ENCODE measurements at regions of chr9 and their contacts with region 1.

Region 1: DNA sequence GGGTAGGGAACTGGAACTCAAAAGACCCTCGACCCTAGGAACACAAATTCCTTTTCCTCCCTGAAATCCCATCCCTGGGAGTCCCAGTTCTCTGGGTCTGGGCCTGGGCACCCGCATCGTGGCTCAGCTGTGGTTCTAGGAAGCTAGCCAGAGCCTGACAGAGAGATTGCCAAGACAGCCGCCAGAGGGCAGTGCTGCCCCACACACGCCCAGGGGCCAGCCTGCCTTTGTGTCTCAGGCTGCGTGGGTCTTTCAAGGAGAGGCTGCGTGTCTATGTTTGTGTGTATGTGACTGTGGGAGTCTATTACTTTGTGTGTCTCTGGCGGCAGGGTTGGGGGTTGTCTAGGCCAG is 32.0 kb upstream of the TTLL11 start:
- DNase-seq: no peak
- H3K4me3 ChIP-seq: no peak overlapping the region
- H3K27me3 ChIP-seq: no peaks in the 10 kb centered on the region
- CTCF ChIP-seq: peak; percentile 97

Region 2: DNA sequence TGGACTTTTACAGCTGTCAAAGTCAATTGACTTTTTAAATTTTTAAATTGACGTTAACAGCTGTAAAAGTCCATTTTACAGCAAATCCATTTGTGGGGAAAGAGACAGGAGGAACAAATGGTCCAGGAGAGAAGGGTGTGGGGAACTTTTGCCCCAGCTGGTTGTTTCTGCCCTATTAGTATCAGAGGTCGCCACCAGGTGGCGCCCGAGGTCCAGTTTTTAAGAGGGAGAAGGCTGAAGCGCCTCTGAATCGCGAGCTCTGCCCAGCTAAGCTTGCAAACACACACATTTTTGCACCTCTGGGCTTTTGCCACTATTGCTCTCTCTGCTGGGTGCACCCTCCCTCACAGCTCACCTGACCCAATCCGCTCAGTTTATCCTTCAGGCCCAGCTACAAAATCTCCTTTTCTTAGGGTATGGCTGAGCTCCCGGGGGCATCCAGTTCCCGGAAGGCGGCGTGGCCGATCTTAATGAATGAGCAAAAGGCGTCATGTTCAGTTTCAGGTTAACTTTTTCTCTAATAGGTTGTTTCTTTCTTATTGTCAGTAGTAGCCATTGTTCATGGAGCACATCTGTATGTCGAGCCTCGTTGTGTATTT is 25.8 kb before region 1 on chr9:
- CTCF ChIA-PET with region 1: interaction called, 212 read pairs
- POLR2A ChIA-PET with region 1: no interaction called
- DNase-seq: no peak
- H3K4me3 ChIP-seq: no peak overlapping the region
- H3K27me3 ChIP-seq: no peaks in the 10 kb centered on the region; the same call in 1 of the 2 replicates
- CTCF ChIP-seq: peak; percentile 83

Region 3: GRCh38 chr9:122144836-122145591 is 19.9 kb after region 1 on chr9:
- CTCF ChIA-PET with region 1: interaction called, 28 read pairs
- POLR2A ChIA-PET with region 1: no interaction called
- DNase-seq: no peak
- H3K4me3 ChIP-seq: no peak overlapping the region
- H3K27me3 ChIP-seq: no peaks in the 10 kb centered on the region
- CTCF ChIP-seq: peak; percentile 49

Region 4: GRCh38 chr9:122350638-122351355 is 225.7 kb after region 1 on chr9:
- CTCF ChIA-PET with region 1: interaction called, 422 read pairs
- POLR2A ChIA-PET with region 1: no interaction called
- DNase-seq: no peak
- H3K4me3 ChIP-seq: no peak overlapping the region
- H3K27me3 ChIP-seq: no peaks in the 10 kb centered on the region
- CTCF ChIP-seq: peak; percentile 94

Region 5: GRCh38 chr9:122445155-122445749 is 320.1 kb after region 1 on chr9:
- CTCF ChIA-PET with region 1: interaction called, 10 read pairs
- POLR2A ChIA-PET with region 1: no interaction called
- DNase-seq: peak; percentile 90
- H3K4me3 ChIP-seq: no peak overlapping the region
- H3K27me3 ChIP-seq: no peaks in the 10 kb centered on the region
- CTCF ChIP-seq: peak; percentile 24; the same call in 1 of the 2 replicates

Region 6: DNA sequence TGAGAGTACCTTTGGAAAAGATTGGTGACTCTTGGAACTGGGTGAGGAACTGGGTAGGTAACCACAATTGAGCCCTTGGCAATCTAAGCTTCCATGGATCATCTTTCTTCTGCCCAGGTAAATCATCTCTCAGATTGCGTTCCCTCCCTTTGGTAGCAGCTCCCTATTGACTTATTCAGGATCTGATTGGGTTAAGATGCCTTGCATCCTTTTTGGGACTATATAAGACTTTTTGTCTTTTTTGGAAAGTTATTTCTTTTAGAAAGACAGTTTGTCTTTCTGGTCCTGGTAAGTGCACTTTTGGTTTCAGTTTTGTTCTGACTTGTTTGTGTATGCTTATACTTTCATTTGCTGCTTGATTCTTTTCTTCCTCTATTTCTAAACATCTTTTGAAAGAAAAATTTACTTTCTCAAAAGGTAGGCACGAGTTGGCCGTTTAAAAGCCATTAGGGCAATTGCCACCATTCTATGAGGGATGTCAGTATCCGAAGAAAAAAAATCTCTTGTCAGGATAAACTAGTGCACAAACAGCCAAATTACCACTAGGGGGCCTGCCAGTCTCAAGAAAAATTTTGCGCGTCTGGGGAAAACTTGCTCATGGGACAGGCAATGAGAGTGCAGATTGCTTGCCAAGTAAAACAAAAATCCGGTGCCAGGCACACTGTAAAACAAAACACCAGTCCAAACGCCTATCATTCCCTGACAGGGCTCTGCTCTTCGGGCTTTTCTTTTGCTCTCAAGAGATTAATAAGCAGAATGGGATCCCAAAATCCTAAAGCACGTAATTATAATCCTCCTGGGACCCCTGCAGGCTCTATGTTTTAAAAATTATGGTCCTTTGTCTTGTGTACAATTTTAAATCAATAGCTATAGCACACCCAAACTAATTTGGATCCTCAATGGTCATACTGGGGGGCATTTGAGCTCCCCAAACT is 339.8 kb after region 1 on chr9:
- CTCF ChIA-PET with region 1: interaction called, 18 read pairs
- POLR2A ChIA-PET with region 1: interaction called, 3 read pairs
- DNase-seq: peak; percentile 69
- H3K4me3 ChIP-seq: peak overlapping the region; percentile 33
- H3K27me3 ChIP-seq: no peaks in the 10 kb centered on the region
- CTCF ChIP-seq: peak; percentile 82

Measured in BJ (cell line).